Ascending aorta (tissue), 2 donors: ENCODE measurements at regions of chr17 and their contacts with region 1.

Region 1: DNA sequence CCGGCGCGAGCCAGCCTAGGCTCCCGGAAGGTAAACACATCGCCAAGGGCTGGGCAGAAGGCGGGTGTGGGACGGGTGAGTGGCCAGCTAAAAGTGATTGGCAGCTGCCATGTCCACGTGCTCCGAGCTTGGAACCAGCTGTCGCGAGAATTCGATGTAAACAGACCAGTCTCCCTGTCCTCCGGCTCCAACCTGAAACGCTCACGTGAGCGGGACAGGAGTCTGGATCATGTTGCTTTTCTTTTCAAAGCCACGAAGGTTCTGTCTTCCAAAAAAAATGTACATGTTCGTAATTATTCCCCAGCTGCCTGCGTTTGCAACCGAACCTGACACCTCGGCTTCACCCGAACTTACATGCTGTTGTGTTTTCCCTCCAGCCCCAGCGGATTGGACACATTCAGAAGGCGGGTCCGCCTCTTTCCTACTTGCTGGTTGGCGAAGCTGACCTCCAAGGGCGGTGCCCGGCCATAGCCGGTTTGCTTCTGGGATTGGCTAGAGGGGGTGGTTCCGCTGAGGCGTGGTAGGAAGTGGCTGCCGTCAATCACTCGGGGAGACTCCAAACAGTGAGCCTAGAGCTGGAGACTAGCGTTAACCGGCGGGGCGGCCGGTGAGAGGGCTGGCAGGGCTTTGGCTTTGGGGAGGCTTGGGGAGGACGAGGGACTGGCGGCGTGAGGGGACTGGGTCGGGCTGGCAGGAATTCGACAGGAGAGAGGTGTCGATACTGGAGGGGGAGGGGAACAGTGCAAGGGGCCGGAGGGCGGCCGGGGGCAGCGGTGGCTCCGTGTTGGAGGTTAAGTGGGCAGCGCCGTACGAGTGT is at the start of gene BCAS3:
- DNase-seq: peak; percentile 98 to 99
- H3K4me3 ChIP-seq: peak within 1 kb of the TSS; percentile 71 to 79
- H3K27ac ChIP-seq: peak within 1 kb of the TSS; percentile 63 to 69
- H3K4me1 ChIP-seq: peaks cover 0 to 10% of the 10 kb centered on the region in 2 donors
- H3K27me3 ChIP-seq: no peaks in the 10 kb centered on the region
- CTCF ChIP-seq: no peak
- total RNA-seq, gene BCAS3: 75.9 TPM

Region 2: GRCh38 chr17:59707114-59707970 is 970.2 kb before region 1 on chr17 and contains the starts of genes PTRH2 and VMP1:
- intact Hi-C with region 1: loop called (anchors 10 kb)
- DNase-seq: peak; percentile 98 to 99
- H3K4me3 ChIP-seq: peak within 1 kb of the TSS; percentile 75 to 90
- H3K27ac ChIP-seq: peak within 1 kb of the TSS; percentile 91 to 95
- H3K4me1 ChIP-seq: peaks cover 9 to 26% of the 10 kb centered on the region in 2 donors
- H3K27me3 ChIP-seq: no peaks in the 10 kb centered on the region
- CTCF ChIP-seq: no peak
- total RNA-seq, gene PTRH2: 125 TPM
- total RNA-seq, gene VMP1: 183 TPM

Region 3: GRCh38 chr17:60077672-60078519 is 599.6 kb before region 1 on chr17:
- intact Hi-C with region 1: loop called (anchors 2 kb)
- DNase-seq: no peak
- H3K4me3 ChIP-seq: peak overlapping the region; percentile 90 to 92
- H3K27ac ChIP-seq: peak overlapping the region; percentile 68 to 76
- H3K4me1 ChIP-seq: peaks cover 0 to 7% of the 10 kb centered on the region in 2 donors
- H3K27me3 ChIP-seq: no peaks in the 10 kb centered on the region
- CTCF ChIP-seq: no peak